Calu3 (cell line): ENCODE measurements at regions of chr1 and their contacts with region 1.

Region 1: GRCh38 chr1:186498695-186499389 is 37.9 kb upstream of the PDC start:
- DNase-seq: peak; percentile 28
- H3K4me3 Mint-ChIP-seq: peak overlapping the region; percentile 26
- H3K27ac Mint-ChIP-seq: peak overlapping the region; percentile 92
- H3K4me1 Mint-ChIP-seq: peaks cover 91% of the 10 kb centered on the region
- H3K27me3 Mint-ChIP-seq: no peaks in the 10 kb centered on the region
- CTCF ChIP-seq: no peak

Region 2: GRCh38 chr1:186511761-186512637 is 13.2 kb after region 1 on chr1:
- CTCF ChIA-PET with region 1: interaction called, 5 read pairs
- intact Hi-C with region 1: loop called (anchors 2 kb)
- DNase-seq: peak; percentile 84
- H3K4me3 Mint-ChIP-seq: peak overlapping the region; percentile 16
- H3K27ac Mint-ChIP-seq: peak overlapping the region; percentile 25
- H3K4me1 Mint-ChIP-seq: peaks cover 33% of the 10 kb centered on the region
- H3K27me3 Mint-ChIP-seq: no peaks in the 10 kb centered on the region
- CTCF ChIP-seq: no peak

Region 3: DNA sequence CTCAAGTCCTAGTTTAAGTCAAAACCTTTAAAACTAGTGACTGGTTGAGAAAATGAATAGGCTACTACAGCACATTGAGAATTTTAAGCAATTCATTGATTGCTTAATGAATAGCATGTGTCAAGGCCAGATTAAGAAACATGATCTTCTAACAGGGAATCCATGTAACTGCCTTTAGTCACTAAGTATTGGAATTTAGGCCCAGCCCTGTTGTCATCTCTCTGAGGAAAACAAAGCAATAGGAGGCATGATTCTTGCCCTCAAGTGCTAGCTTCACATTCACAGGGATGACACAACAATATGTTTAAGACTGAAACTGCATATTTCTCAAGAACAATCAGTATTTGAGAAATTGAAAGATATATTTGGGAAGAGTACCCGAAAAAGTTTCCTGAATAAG is 251.4 kb after region 1 on chr1:
- CTCF ChIA-PET with region 1: no interaction called
- intact Hi-C with region 1: no loop called
- DNase-seq: no peak
- H3K4me3 Mint-ChIP-seq: no peak overlapping the region
- H3K27ac Mint-ChIP-seq: no peak overlapping the region
- H3K4me1 Mint-ChIP-seq: peaks cover 8% of the 10 kb centered on the region
- H3K27me3 Mint-ChIP-seq: no peaks in the 10 kb centered on the region
- CTCF ChIP-seq: no peak